HepG2 (cell line): ENCODE measurements at regions of chr7 and their contacts with region 1.

Region 1: DNA sequence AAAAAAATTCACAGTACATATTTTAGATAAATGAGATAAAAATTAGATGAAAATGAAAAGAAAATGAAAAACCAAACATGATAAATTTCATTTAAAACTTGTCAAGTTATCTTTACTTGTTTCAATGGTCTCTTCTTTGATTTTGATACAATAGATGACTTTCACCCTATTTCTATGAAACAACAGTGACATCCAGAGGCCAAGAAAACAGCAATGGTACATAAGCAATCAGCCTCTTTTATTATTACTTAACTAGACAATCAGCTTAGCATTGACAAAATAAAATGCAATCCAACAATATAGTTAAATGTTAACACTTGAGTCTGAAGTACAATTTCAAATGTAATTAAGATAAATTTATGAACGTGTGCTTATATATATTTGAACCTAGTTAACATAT is 74.8 kb upstream of the GPR37 start:
- DNase-seq: peak; percentile 7
- ATAC-seq: no peak
- H3K4me3 ChIP-seq: no peak overlapping the region
- H3K27ac ChIP-seq: no peak overlapping the region
- H3K4me1 ChIP-seq: peaks cover 14% of the 10 kb centered on the region
- H3K27me3 ChIP-seq: no peaks in the 10 kb centered on the region
- CTCF ChIP-seq: peak; percentile 31
- EP300 ChIP-seq: no peak
- POLR2A ChIP-seq: no peak
- RAD21 ChIP-seq: no peak

Region 2: GRCh38 chr7:124152859-124153692 is 687.4 kb before region 1 on chr7:
- CTCF ChIA-PET with region 1: interaction called, 4 read pairs
- POLR2A ChIA-PET with region 1: no interaction called
- in situ Hi-C with region 1: no loop called
- intact Hi-C with region 1: loop called (anchors 2 kb)
- DNase-seq: peak; percentile 27
- ATAC-seq: peak; percentile 95
- H3K4me3 ChIP-seq: no peak overlapping the region
- H3K27ac ChIP-seq: no peak overlapping the region
- H3K4me1 ChIP-seq: no peaks in the 10 kb centered on the region
- H3K27me3 ChIP-seq: no peaks in the 10 kb centered on the region
- CTCF ChIP-seq: peak; percentile 46
- EP300 ChIP-seq: no peak
- POLR2A ChIP-seq: no peak
- RAD21 ChIP-seq: no peak

Region 3: DNA sequence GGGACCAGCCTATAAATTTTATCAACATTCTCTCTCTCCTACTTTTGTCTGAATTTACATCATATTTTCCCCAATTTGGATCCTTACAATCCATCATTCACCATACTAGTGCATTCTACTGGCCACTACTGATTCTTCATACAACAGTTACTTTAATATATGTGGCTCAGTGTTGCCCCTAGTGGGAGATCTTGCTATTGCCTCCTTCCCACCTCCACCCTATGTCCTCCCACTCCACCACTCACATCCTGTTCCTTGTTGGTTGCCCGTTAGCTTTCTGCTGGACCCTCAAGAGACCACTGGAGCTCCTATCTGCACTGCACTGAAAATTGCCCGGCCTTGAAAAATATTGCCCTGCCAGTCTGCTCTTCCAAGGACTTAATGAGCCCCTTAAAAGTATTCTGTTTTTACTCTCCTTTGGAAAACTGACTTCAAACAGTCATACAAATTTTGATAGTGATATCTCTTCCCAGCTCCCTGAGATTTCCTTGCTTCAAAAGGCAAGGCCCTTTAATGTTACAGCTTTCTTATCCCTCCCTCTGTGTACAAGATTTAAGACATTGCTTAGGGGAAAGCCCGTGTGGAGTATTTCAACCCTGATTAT is 564.3 kb before region 1 on chr7:
- CTCF ChIA-PET with region 1: no interaction called
- POLR2A ChIA-PET with region 1: no interaction called
- in situ Hi-C with region 1: no loop called
- intact Hi-C with region 1: loop called (anchors 5 kb)
- DNase-seq: peak; percentile 29
- ATAC-seq: peak; percentile 96
- H3K4me3 ChIP-seq: no peak overlapping the region
- H3K27ac ChIP-seq: no peak overlapping the region
- H3K4me1 ChIP-seq: no peaks in the 10 kb centered on the region
- H3K27me3 ChIP-seq: no peaks in the 10 kb centered on the region
- CTCF ChIP-seq: peak; percentile 33
- EP300 ChIP-seq: no peak
- POLR2A ChIP-seq: no peak
- RAD21 ChIP-seq: no peak

Region 4: DNA sequence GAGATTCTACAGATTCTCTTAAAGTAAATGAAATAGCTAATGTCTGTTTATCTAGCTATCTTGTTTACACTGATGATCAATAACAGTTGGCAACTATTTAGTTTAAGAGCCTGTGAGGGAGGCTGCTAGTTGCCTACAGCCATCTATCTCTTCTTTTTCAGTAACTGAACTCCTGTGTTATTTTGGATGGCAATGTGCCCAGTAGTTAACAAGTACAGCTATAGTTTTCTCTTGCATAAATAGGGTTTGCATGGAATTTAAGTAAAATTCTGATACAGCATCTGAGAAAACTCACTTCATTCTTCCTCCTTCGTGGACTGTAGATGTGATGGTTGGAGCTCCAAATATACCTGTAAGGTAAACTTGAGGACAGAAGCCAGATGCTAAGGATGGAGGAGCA is 308.7 kb after region 1 on chr7:
- CTCF ChIA-PET with region 1: no interaction called
- POLR2A ChIA-PET with region 1: no interaction called
- in situ Hi-C with region 1: no loop called
- intact Hi-C with region 1: no loop called
- DNase-seq: no peak
- ATAC-seq: no peak
- H3K4me3 ChIP-seq: no peak overlapping the region
- H3K27ac ChIP-seq: no peak overlapping the region
- H3K4me1 ChIP-seq: no peaks in the 10 kb centered on the region
- H3K27me3 ChIP-seq: no peaks in the 10 kb centered on the region
- CTCF ChIP-seq: no peak
- EP300 ChIP-seq: no peak
- POLR2A ChIP-seq: no peak
- RAD21 ChIP-seq: no peak